ENCODE measurements at regions of chr1 and their contacts with region 1.

Region 1: GRCh38 chr1:165697881-165698760 is at the start of gene ALDH9A1:
- DNase-seq: peak; percentile 93
- H3K4me3 Mint-ChIP-seq: peak within 1 kb of the TSS; percentile 98
- H3K27ac Mint-ChIP-seq: peak within 1 kb of the TSS; percentile 67
- H3K4me1 Mint-ChIP-seq: peaks cover 14% of the 10 kb centered on the region
- H3K27me3 Mint-ChIP-seq: no peaks in the 10 kb centered on the region
- CTCF ChIP-seq: peak; percentile 55
- total RNA-seq, gene ALDH9A1: 54.6 and 57.0 TPM in 2 replicates

Region 2: DNA sequence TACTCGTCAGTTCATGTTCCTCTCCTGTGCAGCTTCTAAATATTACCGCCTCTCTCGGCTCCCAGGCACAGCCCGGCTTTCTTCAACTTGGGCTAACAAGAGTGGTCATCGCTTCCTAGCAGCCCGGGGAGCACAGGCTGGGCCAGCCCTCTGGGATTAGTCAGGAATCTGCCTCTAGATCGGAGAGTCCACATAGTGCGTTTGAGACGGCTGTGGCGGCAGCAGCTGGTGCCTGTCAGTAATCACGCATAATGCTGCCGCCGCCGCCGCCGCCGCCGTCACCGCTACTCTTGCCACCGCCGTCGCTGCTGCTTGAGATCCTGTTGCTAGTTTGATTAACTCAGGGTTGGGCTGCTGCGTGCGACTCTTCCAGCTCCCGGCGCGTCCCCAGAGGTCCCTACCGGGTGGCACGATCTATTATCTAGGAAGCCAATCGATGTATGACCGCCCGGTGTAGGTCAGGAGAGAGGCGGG is 253.2 kb before region 1 on chr1 and contains the start of gene RXRG:
- CTCF ChIA-PET with region 1: no interaction called
- intact Hi-C with region 1: no loop called
- DNase-seq: peak; percentile 12
- H3K4me3 Mint-ChIP-seq: no peak within 1 kb of the TSS
- H3K27ac Mint-ChIP-seq: no peak within 1 kb of the TSS
- H3K4me1 Mint-ChIP-seq: no peaks in the 10 kb centered on the region
- H3K27me3 Mint-ChIP-seq: peaks cover 4% of the 10 kb centered on the region
- CTCF ChIP-seq: no peak
- total RNA-seq, gene RXRG: not detected in 2 replicates

Region 3: DNA sequence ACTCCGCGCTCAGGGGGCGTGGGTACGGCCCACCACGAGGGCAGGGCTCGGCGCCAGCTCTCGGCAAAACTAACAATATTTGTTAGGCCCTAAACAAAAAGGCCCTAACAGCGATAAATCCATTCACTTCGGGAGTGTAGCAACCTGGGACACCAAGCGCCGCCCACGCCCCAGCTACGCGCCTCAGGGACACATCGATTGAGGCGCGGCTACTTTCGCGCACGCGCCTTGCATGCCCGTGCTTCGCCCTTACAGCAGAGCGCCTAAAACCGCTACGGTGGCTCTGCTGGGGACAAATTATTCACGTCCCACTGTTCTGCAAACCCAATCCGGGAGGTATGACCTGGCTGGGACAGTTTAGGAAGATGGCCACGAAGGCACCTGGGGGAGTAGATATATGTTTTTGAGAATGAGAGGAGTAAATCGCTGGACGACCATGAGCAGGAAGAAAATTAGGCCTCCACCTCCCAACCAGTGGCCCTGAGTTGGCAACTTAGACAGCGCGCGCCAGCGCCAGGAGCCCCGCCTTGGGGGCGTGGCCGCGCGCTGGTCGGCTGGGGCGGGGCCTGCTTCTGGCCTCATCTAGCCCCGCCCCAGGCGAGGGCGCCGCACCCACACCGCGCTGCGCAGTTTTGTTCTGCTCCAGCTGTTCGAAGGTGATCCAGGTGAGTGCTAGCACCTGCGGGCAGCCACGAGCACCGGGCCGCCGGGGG is 67.3 kb before region 1 on chr1 and contains the start of gene MGST3:
- CTCF ChIA-PET with region 1: no interaction called
- intact Hi-C with region 1: loop called (anchors 2 kb)
- DNase-seq: peak; percentile 96
- H3K4me3 Mint-ChIP-seq: no peak within 1 kb of the TSS
- H3K27ac Mint-ChIP-seq: no peak within 1 kb of the TSS
- H3K4me1 Mint-ChIP-seq: no peaks in the 10 kb centered on the region
- H3K27me3 Mint-ChIP-seq: no peaks in the 10 kb centered on the region
- CTCF ChIP-seq: no peak
- total RNA-seq, gene MGST3: 136 and 139 TPM in 2 replicates

Region 4: DNA sequence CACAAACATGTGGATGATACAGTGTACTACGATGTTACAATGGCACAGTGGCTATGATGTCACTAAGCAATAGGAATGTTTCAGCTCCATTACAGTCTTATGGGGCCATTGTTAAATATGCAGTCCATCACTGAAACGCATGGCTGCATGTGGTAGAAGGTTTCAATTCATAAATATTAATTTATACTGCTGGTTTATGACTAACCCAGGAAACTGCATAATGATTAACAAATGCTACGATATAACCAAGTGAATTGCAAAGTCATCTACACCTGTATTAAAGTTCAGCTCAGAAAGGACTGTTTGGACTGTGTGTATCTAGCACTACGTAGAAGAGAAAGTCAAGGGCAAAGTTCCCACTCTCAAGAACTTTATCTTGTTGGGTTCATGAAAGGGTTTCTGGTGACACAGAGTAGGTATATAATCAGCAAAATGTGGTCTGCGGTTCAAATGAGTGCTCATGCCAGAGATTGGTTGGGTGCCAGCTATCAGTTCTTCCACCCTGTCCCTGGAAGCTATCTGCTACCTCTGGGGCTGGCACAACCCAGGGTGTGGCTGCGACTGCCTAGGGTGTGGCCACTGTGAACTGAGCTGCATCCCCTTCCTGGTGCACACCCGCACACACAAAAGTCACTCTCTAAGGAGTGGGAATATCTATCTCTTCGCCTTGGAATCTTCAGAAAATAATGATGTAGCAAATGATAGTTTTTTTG is 52.3 kb before region 1 on chr1:
- CTCF ChIA-PET with region 1: interaction called, 8 read pairs
- intact Hi-C with region 1: loop called (anchors 5 kb)
- DNase-seq: peak; percentile 83
- H3K4me3 Mint-ChIP-seq: peak overlapping the region; percentile 32
- H3K27ac Mint-ChIP-seq: peak overlapping the region; percentile 79
- H3K4me1 Mint-ChIP-seq: peaks cover 32% of the 10 kb centered on the region
- H3K27me3 Mint-ChIP-seq: no peaks in the 10 kb centered on the region
- CTCF ChIP-seq: no peak

Measured in Calu3 (cell line).